T-cell (primary cell): ENCODE measurements at regions of chr12 and their contacts with region 1.

Region 1: DNA sequence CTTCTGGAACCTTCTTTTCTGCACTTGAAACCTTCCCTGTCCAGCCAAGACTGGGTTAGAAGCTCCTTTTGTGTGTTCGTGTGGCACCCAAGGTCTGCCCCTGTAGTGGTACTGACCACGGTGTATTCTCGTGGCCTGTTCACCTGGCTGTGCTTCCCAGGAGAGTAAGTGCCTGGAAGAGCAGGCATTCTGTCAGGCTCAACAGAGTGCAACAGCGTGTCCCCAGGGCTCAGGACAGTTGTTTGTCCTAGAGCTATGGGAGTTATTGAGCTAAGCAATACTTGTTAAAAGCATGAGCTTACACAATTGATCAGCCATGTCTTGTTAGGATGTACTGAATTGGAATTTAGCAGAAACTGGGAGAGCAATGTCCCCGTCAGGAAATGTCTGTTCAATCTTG is 12.9 kb upstream of the SLC38A2 start:
- DNase-seq: no peak
- ATAC-seq: no peak
- H3K4me3 ChIP-seq: no peak overlapping the region
- H3K4me3 Mint-ChIP-seq: peak overlapping the region in 1 of 3 donors; percentile 39
- H3K27ac ChIP-seq: no peak overlapping the region
- H3K27ac Mint-ChIP-seq: no peak overlapping the region
- H3K4me1 ChIP-seq: peaks cover 25 to 57% of the 10 kb centered on the region in 2 experiments
- H3K4me1 Mint-ChIP-seq: peaks cover 43 to 49% (median 44%) of the 10 kb centered on the region in 3 donors
- H3K27me3 ChIP-seq: no peaks in the 10 kb centered on the region
- H3K27me3 Mint-ChIP-seq: no peaks in the 10 kb centered on the region

Region 2: DNA sequence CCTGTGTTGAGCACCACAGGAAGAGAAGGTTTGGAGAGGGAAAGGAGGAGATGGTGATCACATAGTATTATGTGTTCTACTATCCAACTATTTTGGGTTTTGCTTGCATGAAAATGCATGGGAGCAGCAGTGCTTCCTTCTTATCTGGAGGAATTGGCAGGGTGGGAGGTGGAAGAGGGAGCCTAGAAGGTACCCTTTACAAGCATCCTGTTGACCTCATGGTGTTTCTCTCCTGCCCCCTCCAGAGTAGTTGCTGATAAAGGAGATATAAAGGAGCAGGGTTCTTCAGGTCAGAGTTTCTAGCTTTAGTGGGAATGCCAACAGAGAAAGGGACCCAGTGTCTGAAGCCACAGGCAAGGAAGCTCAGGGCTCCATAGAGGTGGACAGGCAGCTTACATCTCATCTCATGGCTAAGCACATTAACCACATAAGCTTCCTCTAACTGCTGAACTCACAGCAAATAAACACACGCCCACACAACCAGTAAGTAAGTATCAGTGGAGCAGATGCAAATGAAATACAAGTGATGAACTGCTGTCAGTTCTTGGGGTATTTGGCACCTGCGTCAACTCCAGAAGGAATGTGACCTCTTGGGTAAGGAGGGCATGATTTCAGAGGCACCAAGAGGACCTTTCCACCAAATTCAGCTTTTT is 161.3 kb after region 1 on chr12:
- CTCF ChIA-PET with region 1: no interaction called
- POLR2A ChIA-PET with region 1: interaction called in 1 of 2 experiments, 10 read pairs
- DNase-seq: peak in 1 of 35 experiments; percentile 14
- ATAC-seq: peak; percentile 50 to 82 (median 64)
- H3K4me3 ChIP-seq: no peak overlapping the region
- H3K4me3 Mint-ChIP-seq: peak overlapping the region in 1 of 3 donors; percentile 2
- H3K27ac ChIP-seq: no peak overlapping the region
- H3K27ac Mint-ChIP-seq: peak overlapping the region; percentile 35 to 47
- H3K4me1 ChIP-seq: peaks cover 8 to 22% of the 10 kb centered on the region in 2 experiments
- H3K4me1 Mint-ChIP-seq: peaks cover 44 to 53% (median 45%) of the 10 kb centered on the region in 3 donors
- H3K27me3 ChIP-seq: no peaks in the 10 kb centered on the region
- H3K27me3 Mint-ChIP-seq: no peaks in the 10 kb centered on the region